AG04450 (cell line): ENCODE measurements at regions of chr2 and their contacts with region 1.

Region 1: GRCh38 chr2:96940001-96940615 is 46.3 kb downstream of the FAM178B start:
- DNase-seq: no peak
- H3K4me3 ChIP-seq: no peak overlapping the region
- H3K27ac ChIP-seq: no peak overlapping the region
- H3K27me3 ChIP-seq: peaks cover 11% of the 10 kb centered on the region
- CTCF ChIP-seq: no peak

Region 2: DNA sequence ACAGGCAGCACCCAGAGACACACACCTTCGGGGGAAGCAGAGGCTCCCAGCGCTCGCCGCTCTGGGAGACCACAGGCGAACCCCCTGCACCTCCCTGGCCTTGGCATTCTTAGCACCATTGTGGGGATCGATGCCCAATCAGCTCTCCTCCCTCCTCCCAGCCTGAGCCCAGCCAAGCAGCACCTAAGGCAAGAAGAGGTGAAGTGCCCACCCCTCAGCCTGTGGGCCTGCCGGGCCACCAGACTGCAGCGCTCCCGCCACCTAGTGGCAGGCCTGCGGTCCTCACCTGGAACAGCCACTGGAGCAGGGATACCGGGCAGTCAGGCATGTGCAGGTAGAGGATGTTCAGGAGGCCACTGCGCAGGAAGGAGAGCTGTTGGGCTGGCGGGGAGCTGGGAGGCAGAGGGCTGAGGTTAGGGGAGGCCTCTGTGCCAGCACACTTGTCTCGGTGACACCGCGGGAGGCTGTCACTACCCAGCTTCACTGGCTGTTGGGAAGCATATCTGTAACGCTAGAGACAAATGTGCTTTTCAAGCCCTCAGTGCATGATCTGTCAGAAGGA is 11.1 kb after region 1 on chr2:
- CTCF ChIA-PET with region 1: interaction called, 23 read pairs
- POLR2A ChIA-PET with region 1: no interaction called
- DNase-seq: no peak
- H3K4me3 ChIP-seq: no peak overlapping the region
- H3K27ac ChIP-seq: no peak overlapping the region
- H3K27me3 ChIP-seq: peaks cover 19% of the 10 kb centered on the region
- CTCF ChIP-seq: peak; percentile 83

Region 3: GRCh38 chr2:98634401-98635092 is 1694.4 kb after region 1 on chr2:
- CTCF ChIA-PET with region 1: no interaction called
- POLR2A ChIA-PET with region 1: no interaction called
- DNase-seq: no peak
- H3K4me3 ChIP-seq: no peak overlapping the region
- H3K27ac ChIP-seq: no peak overlapping the region
- H3K27me3 ChIP-seq: peaks cover 14% of the 10 kb centered on the region
- CTCF ChIP-seq: peak; percentile 22; the same call in 1 of the 2 replicates